HCT116 (cell line): ENCODE measurements at regions of chr10 and their contacts with region 1.

Region 1: DNA sequence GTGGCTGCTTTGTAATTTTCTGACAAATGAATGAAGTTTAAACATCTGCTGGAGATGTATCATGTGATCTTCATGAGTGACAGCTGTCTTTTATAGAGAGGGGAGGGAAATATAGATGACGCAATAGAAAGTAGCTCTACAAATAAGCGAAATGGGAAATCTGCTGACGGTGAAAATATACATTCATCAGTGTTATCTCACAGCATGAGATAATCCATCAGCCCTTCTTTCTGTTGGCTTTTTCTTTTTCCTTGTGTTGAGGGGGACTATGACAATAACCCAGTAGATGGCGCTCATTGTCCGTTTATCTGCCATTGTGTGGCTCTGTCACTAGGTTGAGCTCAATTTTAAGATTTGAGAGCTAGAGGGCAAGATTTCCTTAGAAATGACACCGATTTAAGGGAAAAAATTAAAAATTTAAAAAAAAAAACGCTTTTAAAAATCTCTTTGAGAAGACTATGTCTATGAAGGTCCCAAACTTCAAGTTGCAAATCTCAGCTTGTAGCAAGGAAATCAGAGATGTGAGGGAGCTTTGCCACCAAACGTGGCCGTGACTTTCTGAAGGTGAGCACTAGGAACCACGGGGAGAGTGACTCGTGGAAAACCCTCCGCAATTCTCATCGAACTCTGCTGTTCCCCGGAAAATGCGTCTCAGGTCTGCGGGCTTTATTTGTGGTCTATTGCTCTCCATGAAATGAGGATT is 114.6 kb upstream of the SFMBT2 start:
- DNase-seq: peak; percentile 51
- ATAC-seq: peak; percentile 83
- H3K4me3 ChIP-seq: no peak overlapping the region
- H3K27ac ChIP-seq: no peak overlapping the region
- H3K4me1 ChIP-seq: no peaks in the 10 kb centered on the region
- H3K27me3 ChIP-seq: peaks cover 20% of the 10 kb centered on the region
- CTCF ChIP-seq: peak; percentile 58 to 96 (median 79)
- POLR2A ChIP-seq: no peak
- RAD21 ChIP-seq: peak; percentile 84

Region 2: DNA sequence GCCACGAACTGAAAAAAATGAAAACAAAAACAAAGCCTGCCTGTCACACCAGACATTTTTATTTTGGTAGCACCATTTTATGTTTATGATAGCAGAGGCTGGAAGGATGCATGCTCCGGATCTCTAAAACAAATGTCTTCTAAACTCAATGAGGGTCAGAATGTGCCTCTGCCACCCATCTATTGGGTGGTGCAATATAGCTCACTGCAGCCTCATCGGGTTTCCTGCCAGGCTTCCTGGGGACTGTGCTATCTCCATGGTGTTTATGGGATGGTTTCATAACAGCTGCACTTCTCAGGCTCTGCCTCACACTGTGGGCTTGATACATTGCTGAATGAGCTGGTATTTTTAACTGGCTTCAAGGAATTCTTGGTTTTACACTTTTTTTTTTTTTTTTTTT is 46.9 kb after region 1 on chr10:
- CTCF ChIA-PET with region 1: no interaction called
- POLR2A ChIA-PET with region 1: no interaction called
- RAD21 ChIA-PET with region 1: no interaction called
- intact Hi-C with region 1: no loop called
- DNase-seq: no peak
- ATAC-seq: no peak
- H3K4me3 ChIP-seq: no peak overlapping the region
- H3K27ac ChIP-seq: no peak overlapping the region
- H3K4me1 ChIP-seq: no peaks in the 10 kb centered on the region
- H3K27me3 ChIP-seq: peaks cover 18% of the 10 kb centered on the region; the same call in 1 of the 2 replicates
- CTCF ChIP-seq: no peak
- POLR2A ChIP-seq: no peak
- RAD21 ChIP-seq: no peak

Region 3: GRCh38 chr10:7622969-7623368 is 97.5 kb after region 1 on chr10:
- CTCF ChIA-PET with region 1: interaction called, 3 read pairs
- POLR2A ChIA-PET with region 1: no interaction called
- RAD21 ChIA-PET with region 1: no interaction called
- intact Hi-C with region 1: loop called (anchors 5 kb)
- DNase-seq: no peak
- ATAC-seq: peak; percentile 50; the same call in 1 of the 2 replicates
- H3K4me3 ChIP-seq: no peak overlapping the region
- H3K27ac ChIP-seq: no peak overlapping the region
- H3K4me1 ChIP-seq: no peaks in the 10 kb centered on the region
- H3K27me3 ChIP-seq: peaks cover 18% of the 10 kb centered on the region; the same call in 1 of the 2 replicates
- CTCF ChIP-seq: peak; percentile 13 to 19 (median 16); a peak in 2 of 6 replicates
- POLR2A ChIP-seq: no peak
- RAD21 ChIP-seq: peak; percentile 36

Region 4: DNA sequence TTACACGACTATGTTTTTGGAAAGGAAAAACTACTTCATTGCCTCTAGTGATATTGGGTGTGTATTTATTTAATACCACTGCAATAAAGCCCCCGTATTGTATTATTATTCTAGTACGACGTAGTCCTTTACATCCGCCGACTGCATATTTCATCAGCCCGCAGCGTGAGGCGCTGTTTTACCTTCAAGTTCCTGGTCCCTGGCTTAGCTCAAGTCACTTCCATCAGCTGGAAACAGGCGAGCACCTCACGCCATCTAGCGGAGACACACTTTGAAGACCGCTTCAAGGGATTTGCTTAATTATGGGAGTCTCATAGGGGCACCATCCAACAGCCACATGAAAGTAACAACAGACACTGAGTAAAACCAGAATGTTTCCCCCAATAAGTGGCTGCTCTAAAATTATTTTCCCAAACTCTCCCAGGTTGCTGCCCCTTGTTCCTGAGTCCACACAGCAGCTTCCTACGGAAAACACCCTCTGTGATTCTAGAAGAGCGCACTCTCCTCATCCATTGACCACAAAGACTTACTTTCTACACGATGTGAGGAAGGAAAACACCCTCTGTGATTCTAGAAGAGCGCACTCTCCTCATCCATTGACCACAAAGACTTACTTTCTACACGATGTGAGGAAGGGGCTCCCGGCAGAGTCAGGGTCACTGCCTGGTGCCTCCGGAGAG is 161.9 kb after region 1 on chr10:
- CTCF ChIA-PET with region 1: interaction called, 145 read pairs
- POLR2A ChIA-PET with region 1: interaction called, 9 read pairs
- RAD21 ChIA-PET with region 1: interaction called, 20 to 22 read pairs
- intact Hi-C with region 1: loop called (anchors 1 kb)
- DNase-seq: peak; percentile 95
- ATAC-seq: peak; percentile 92
- H3K4me3 ChIP-seq: no peak overlapping the region
- H3K27ac ChIP-seq: no peak overlapping the region
- H3K4me1 ChIP-seq: peaks cover 0 to 8% of the 10 kb centered on the region in 2 experiments; a peak in 1 of 4 replicates
- H3K27me3 ChIP-seq: peaks cover 3% of the 10 kb centered on the region; the same call in 1 of the 2 replicates
- CTCF ChIP-seq: peak; percentile 90 to 98 (median 93)
- POLR2A ChIP-seq: no peak
- RAD21 ChIP-seq: peak; percentile 87

Region 5: DNA sequence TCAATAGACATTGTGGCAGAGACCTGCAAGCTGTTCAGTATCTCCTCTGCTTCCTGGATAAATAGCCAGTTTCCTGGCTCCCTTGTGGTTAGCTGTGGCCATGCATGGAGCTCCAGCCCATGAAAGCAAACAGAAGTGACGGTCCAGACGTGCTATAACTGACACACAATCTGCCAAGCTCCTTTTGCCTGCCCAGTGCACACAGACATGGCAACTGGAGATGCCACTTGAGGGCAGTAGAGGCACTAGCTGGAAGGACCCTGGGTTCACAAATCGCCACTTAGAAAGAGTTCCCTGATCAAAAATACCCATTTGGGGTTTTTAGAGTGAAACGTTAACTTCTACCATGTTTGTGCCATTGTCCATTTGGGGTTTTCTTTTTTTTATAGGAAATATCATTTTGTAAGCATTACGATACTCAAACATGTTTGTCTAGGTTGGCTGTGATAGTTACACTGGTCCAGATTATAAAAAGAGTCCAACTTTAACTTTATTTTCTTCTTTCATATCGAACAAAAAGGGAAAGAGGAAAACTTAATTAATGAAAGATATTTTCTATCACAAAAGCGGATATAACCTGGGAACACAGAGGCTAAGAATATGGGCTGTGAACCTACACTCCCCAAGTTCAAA is 231.0 kb after region 1 on chr10:
- CTCF ChIA-PET with region 1: interaction called, 17 read pairs
- POLR2A ChIA-PET with region 1: no interaction called
- RAD21 ChIA-PET with region 1: no interaction called
- intact Hi-C with region 1: loop called (anchors 10 kb)
- DNase-seq: peak; percentile 21
- ATAC-seq: peak; percentile 92
- H3K4me3 ChIP-seq: no peak overlapping the region
- H3K27ac ChIP-seq: no peak overlapping the region
- H3K4me1 ChIP-seq: no peaks in the 10 kb centered on the region
- H3K27me3 ChIP-seq: no peaks in the 10 kb centered on the region
- CTCF ChIP-seq: peak; percentile 14 to 86 (median 70); a peak in 5 of 6 replicates
- POLR2A ChIP-seq: no peak
- RAD21 ChIP-seq: peak; percentile 56

Region 6: GRCh38 chr10:7872041-7872442 is 346.6 kb after region 1 on chr10:
- CTCF ChIA-PET with region 1: interaction called, 3 read pairs
- POLR2A ChIA-PET with region 1: no interaction called
- RAD21 ChIA-PET with region 1: interaction called in 1 of 2 experiments, 3 read pairs
- intact Hi-C with region 1: loop called (anchors 5 kb)
- DNase-seq: peak; percentile 0
- ATAC-seq: no peak
- H3K4me3 ChIP-seq: no peak overlapping the region; a peak in 1 of 4 replicates
- H3K27ac ChIP-seq: no peak overlapping the region
- H3K4me1 ChIP-seq: no peaks in the 10 kb centered on the region
- H3K27me3 ChIP-seq: no peaks in the 10 kb centered on the region
- CTCF ChIP-seq: peak; percentile 51 to 80 (median 57); a peak in 5 of 6 replicates
- POLR2A ChIP-seq: no peak
- RAD21 ChIP-seq: peak; percentile 70

Region 7: GRCh38 chr10:8221451-8221850 is 696.0 kb after region 1 on chr10:
- CTCF ChIA-PET with region 1: no interaction called
- POLR2A ChIA-PET with region 1: no interaction called
- RAD21 ChIA-PET with region 1: no interaction called
- intact Hi-C with region 1: no loop called
- DNase-seq: no peak
- ATAC-seq: no peak
- H3K4me3 ChIP-seq: no peak overlapping the region
- H3K27ac ChIP-seq: no peak overlapping the region
- H3K4me1 ChIP-seq: no peaks in the 10 kb centered on the region
- H3K27me3 ChIP-seq: no peaks in the 10 kb centered on the region
- CTCF ChIP-seq: no peak
- POLR2A ChIP-seq: no peak
- RAD21 ChIP-seq: no peak

Region 8: DNA sequence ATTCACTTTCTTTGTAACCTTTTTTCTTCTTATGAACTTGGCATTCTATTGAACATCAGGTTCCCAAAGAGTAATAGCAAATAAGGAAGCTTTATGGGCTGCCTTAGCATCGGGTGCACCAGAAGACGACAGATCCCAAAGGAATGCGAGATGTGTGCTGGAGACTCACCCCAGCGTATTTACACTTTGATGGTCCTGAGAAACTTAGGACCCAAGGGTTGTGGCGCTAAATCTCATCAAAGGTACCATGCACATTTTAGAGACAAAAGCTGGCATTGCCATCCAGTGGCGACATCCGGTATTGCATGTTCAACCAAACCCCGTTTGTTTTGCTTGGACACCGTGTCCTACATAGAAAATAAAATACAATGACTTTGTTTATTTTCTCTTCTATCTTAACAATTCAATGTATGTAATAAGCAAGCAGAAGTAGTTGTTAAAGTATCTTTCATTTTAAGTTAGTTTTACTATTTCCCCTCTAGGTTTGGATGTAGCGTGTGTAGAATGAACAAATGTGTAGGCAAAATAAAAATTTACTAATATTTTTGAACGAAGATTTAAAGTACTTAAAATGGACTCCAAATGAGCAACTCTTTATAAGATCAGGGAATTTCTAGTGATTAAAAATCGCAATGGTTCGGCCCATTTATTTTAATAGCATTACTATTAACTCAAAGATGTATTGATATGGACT is 1683.8 kb after region 1 on chr10:
- CTCF ChIA-PET with region 1: interaction called, 11 read pairs
- POLR2A ChIA-PET with region 1: no interaction called
- RAD21 ChIA-PET with region 1: no interaction called
- intact Hi-C with region 1: loop called (anchors 2 kb)
- DNase-seq: peak; percentile 33
- ATAC-seq: peak; percentile 47
- H3K4me3 ChIP-seq: no peak overlapping the region
- H3K27ac ChIP-seq: no peak overlapping the region
- H3K4me1 ChIP-seq: no peaks in the 10 kb centered on the region
- H3K27me3 ChIP-seq: no peaks in the 10 kb centered on the region
- CTCF ChIP-seq: peak; percentile 32 to 80 (median 75); a peak in 5 of 6 replicates
- POLR2A ChIP-seq: no peak
- RAD21 ChIP-seq: peak; percentile 61

Region 9: GRCh38 chr10:9302120-9302746 is 1776.8 kb after region 1 on chr10:
- CTCF ChIA-PET with region 1: interaction called, 8 read pairs
- POLR2A ChIA-PET with region 1: no interaction called
- RAD21 ChIA-PET with region 1: no interaction called
- intact Hi-C with region 1: loop called (anchors 1 kb)
- DNase-seq: peak; percentile 23
- ATAC-seq: 0 out of 2 replicates have a peak, but pooled peaks have one; percentile 40
- H3K4me3 ChIP-seq: no peak overlapping the region
- H3K27ac ChIP-seq: no peak overlapping the region
- H3K4me1 ChIP-seq: no peaks in the 10 kb centered on the region
- H3K27me3 ChIP-seq: no peaks in the 10 kb centered on the region
- CTCF ChIP-seq: peak in 2 of 3 experiments; percentile 26 to 48; a peak in 3 of 6 replicates
- POLR2A ChIP-seq: no peak
- RAD21 ChIP-seq: peak; percentile 52